Prostate gland (tissue), 2 donors: ENCODE measurements at regions of chr4 and their contacts with region 1.

Region 1: DNA sequence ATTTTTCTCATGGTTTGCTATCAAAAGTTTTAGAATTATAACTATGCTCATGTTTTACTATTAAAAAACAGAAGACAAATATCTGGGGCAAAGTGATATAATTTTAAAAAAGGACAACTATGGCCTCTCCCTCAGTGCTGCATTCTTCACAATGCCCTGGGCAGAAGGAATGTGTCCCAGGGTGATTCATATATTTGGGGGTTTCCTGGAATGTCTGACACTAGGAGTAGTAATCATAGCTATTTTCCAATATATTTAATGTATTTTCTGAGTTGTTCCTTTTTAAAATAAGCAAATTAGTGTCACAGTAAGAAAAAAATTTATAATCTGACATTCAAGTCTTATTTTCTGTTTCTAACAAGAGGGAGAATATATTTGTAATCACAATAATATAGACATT is 281.7 kb downstream of the UNC5C start:
- DNase-seq: no peak
- H3K4me3 ChIP-seq: no peak overlapping the region
- H3K27ac ChIP-seq: no peak overlapping the region
- H3K4me1 ChIP-seq: no peaks in the 10 kb centered on the region
- H3K27me3 ChIP-seq: no peaks in the 10 kb centered on the region
- CTCF ChIP-seq: no peak
- POLR2A ChIP-seq: no peak

Region 2: DNA sequence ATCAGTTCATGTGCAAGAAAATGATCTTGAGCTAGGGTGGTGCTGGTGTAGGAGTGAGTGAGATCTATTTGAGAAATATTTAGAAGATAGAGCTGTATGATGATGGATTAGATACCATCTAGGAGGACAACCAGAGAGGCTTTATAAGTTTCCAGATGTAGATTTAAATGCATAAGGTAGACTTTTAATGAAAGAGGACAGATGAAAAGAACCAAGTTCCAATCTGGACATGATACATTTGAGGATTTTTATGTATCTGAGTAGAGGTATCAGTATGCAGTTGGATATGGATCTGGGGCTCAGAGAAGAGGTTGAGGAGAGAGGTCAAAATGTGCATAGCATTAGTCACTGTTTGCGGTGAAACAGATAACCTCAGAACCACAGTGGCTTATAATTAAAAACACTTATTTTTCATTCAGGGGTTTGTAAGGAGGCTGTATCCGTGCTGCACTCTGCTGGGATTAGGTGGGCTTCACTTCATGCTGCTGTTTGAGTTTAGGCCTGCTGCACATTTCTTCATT is 160.6 kb before region 1 on chr4:
- intact Hi-C with region 1: no loop called
- DNase-seq: no peak
- H3K4me3 ChIP-seq: no peak overlapping the region
- H3K27ac ChIP-seq: no peak overlapping the region
- H3K4me1 ChIP-seq: no peaks in the 10 kb centered on the region
- H3K27me3 ChIP-seq: no peaks in the 10 kb centered on the region
- CTCF ChIP-seq: no peak
- POLR2A ChIP-seq: no peak

Region 3: GRCh38 chr4:95220205-95221175 is 46.6 kb before region 1 on chr4:
- intact Hi-C with region 1: loop called (anchors 5 kb)
- DNase-seq: no peak
- H3K4me3 ChIP-seq: no peak overlapping the region
- H3K27ac ChIP-seq: no peak overlapping the region
- H3K4me1 ChIP-seq: no peaks in the 10 kb centered on the region
- H3K27me3 ChIP-seq: no peaks in the 10 kb centered on the region
- CTCF ChIP-seq: no peak
- POLR2A ChIP-seq: no peak

Region 4: DNA sequence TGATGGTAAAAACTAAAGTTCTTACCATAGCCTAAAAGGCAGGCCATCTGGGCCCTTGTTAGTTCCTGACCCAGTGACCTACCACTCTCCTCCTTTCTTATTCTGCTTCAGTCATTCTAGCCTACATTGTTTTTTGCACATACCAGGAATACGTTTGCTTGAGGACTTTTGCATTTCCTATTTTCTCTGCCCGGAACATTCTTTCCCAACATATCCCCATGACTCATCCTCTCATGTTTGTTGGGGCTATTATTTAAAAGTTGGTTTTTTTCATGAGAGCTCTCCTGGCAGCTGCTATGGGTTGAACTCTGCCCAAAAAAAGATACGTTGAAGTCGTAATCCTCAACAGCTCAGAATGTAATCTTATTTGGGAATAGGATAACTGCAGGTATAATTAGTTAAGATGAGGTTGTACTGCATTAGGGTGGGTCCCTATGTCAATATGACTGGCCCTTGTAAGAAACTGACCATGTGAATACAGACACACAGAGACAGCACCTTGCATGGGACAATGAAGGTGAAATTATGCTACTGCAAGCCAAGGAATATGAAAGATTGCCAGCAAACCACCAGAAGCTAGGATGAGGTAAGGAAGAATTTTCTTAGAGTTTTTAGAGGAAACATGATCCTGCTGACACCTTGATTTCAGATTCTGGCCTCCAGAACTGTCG is 434.6 kb after region 1 on chr4:
- intact Hi-C with region 1: no loop called
- DNase-seq: no peak
- H3K4me3 ChIP-seq: no peak overlapping the region
- H3K27ac ChIP-seq: no peak overlapping the region
- H3K4me1 ChIP-seq: no peaks in the 10 kb centered on the region
- H3K27me3 ChIP-seq: no peaks in the 10 kb centered on the region
- CTCF ChIP-seq: no peak
- POLR2A ChIP-seq: no peak